IMR-90 (cell line): ENCODE measurements at regions of chr9 and their contacts with region 1.

Region 1: GRCh38 chr9:119234636-119235035 is 134.6 kb downstream of the BRINP1 start:
- DNase-seq: no peak
- ATAC-seq: no peak
- H3K4me3 ChIP-seq: no peak overlapping the region
- H3K27ac ChIP-seq: no peak overlapping the region
- H3K4me1 ChIP-seq: no peaks in the 10 kb centered on the region
- H3K27me3 ChIP-seq: no peaks in the 10 kb centered on the region
- CTCF ChIP-seq: no peak
- POLR2A ChIP-seq: no peak
- RAD21 ChIP-seq: no peak

Region 2: DNA sequence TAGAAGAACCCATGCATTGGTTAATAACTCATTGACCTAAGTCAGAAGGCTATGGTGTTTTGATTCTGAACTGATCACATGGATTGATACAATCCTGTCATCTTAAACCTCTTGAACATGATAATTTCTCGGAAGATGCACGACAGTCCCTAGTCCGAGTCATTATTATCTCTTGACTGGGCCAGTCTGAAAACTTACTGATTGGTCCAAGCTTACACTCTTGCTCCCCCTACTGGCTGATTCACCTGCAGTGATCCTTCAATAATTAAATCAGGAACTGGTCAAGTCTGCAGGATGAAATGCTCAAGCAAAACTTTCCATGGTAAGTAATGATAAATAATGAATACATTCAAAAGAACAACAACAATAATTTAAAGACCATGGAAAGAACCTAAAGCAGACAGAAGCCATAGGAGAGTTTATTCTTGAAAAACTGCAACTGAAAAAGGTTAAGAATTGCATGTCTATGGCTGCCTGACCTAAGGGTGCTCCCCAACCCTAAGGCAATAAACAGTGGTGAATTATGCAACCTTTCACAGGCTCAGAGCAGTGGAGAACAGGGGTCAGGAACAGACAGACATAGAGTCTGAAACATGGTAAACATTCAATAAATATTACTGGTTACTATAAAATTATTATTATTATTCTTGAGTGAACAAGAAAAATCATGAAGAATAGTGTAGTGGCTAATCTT is 55.3 kb after region 1 on chr9:
- CTCF ChIA-PET with region 1: no interaction called
- POLR2A ChIA-PET with region 1: no interaction called
- dilution Hi-C with region 1: no loop called
- in situ Hi-C with region 1: loop called (anchors 10 kb)
- intact Hi-C with region 1: no loop called
- DNase-seq: no peak
- ATAC-seq: no peak
- H3K4me3 ChIP-seq: no peak overlapping the region
- H3K27ac ChIP-seq: no peak overlapping the region
- H3K4me1 ChIP-seq: no peaks in the 10 kb centered on the region
- H3K27me3 ChIP-seq: no peaks in the 10 kb centered on the region
- CTCF ChIP-seq: no peak
- POLR2A ChIP-seq: no peak
- RAD21 ChIP-seq: peak; percentile 7; the same call in 1 of the 2 replicates